Astrocyte of the cerebellum (primary cell): ENCODE measurements at regions of chr3 and their contacts with region 1.

Region 1: DNA sequence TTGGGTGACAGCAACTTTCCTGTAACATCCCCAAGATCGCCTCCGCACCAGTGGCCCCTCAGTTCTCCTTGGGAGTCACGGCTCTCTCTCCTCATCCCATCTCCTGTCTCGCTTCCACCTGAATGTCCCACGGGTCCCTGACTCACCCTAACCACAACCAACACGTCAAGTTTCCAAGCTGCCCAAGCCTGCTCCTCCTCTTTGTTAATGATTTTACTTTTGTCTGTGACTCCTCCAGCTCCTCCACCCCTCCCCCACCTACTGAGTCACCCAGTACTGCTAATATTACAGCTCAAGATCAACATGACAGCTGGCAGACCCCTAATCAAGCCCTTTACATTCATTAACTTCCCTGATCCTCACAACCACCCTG is 39.3 kb downstream of the BDH1 start:
- DNase-seq: peak; percentile 78
- H3K4me3 ChIP-seq: no peak overlapping the region
- CTCF ChIP-seq: no peak

Region 2: GRCh38 chr3:197564097-197564843 is 47.8 kb after region 1 on chr3:
- in situ Hi-C with region 1: no loop called
- DNase-seq: no peak
- H3K4me3 ChIP-seq: no peak overlapping the region
- CTCF ChIP-seq: no peak

Region 3: GRCh38 chr3:197577366-197578074 is 61.0 kb after region 1 on chr3:
- in situ Hi-C with region 1: loop called (anchors 10 kb)
- DNase-seq: no peak
- H3K4me3 ChIP-seq: no peak overlapping the region
- CTCF ChIP-seq: no peak